Pancreas (tissue), 10 donors: ENCODE measurements at regions of chr7 and their contacts with region 1.

Region 1: DNA sequence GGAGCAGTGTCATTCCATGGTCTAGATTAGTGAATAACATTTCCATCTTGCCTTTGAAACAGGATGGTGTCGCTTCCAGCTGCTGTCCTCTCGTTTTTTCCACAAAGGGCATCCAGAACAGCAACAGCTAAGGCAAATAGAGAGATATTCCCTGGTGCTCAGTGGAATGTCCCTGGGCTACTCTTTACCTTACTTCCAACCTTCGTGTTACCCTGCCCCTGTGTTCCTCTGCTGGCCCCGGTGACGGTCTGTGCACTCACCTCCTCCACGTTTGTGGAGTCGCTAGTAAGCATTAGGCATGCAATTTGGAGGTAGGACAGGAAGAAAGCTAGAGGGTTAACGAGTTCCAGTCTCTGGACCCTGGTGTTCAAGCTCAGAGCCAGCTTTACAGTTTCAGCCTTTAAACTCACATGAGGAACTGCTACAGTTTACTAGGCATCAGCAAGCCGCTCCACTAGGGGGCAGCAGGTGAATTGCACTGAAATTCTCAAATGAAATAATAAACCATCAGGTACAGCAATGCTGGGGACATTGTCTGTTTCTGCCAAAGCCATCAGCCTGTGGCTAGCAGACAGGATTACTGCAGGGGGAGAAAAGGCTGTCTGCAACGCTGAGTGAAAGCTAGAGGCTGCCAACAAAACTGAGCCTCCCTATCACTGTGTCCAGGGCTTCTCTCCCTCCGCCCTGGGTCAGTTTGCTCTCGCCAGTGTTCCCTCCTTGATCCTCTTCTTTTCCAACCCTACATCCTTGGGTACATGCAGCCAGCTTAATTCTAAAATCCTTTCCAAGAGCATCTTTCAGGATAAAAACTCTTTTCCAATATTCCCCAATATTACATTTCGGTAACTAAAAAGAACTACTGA is 9.0 kb downstream of the MRPL32 start:
- DNase-seq: peak; percentile 56 to 87 (median 74)
- ATAC-seq: peak; percentile 58 to 90 (median 86)
- H3K4me3 ChIP-seq: no peak overlapping the region
- H3K27ac ChIP-seq: no peak overlapping the region
- H3K4me1 ChIP-seq: no peaks in the 10 kb centered on the region
- H3K27me3 ChIP-seq: no peaks in the 10 kb centered on the region
- CTCF ChIP-seq: peak; percentile 80 to 89 (median 82)

Region 2: GRCh38 chr7:43249823-43250145 is 308.6 kb after region 1 on chr7:
- intact Hi-C with region 1: loop called in 1 of 3 experiments (anchors 10 kb)
- DNase-seq: no peak
- ATAC-seq: no peak
- H3K4me3 ChIP-seq: no peak overlapping the region
- H3K27ac ChIP-seq: no peak overlapping the region
- H3K4me1 ChIP-seq: no peaks in the 10 kb centered on the region
- H3K27me3 ChIP-seq: no peaks in the 10 kb centered on the region
- CTCF ChIP-seq: no peak

Region 3: DNA sequence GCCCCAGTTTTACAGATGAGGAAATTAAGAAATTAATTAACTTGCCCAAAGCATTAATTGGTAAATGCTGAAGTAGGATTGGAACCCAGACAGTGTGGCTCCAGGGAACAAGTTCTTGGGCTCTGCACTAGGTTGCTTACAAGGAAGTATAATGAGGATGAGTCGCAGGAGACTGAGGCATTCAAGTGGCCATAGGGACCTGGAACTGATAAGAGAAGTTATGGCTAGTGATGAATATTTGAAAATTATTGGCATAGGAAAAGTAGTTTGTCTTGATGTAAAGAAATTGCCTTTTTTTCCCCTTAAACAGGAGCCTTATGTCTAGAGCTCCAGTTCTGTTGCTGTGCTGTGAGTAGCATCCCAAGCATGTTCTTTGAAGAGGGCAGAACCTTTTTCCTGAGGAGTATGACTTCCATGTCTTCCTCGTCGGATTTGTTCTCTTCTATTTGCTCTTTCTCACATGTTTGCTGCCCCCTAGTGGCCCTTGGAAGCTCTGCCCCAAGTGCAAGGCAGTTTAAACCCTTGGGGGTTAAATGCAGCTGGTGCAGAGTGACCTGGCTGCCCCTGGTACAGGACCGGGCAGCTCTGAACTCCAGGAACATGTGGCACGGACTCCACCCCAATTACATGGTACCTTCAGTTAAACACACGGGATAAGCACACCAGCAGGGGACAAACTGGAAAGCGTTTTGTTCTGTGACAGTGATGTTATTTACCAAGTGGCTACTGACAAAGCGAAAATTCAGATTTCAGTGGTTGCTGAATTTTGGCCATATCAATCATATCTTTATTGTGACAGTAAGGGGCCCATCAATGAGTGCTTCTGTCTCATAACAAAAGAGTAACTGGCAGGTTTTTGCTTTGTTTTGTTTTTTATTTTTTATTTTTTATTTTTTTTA is 320.0 kb after region 1 on chr7:
- intact Hi-C with region 1: loop called in 2 of 3 experiments (anchors 10 kb)
- DNase-seq: peak; percentile 45 to 76 (median 64)
- ATAC-seq: peak; percentile 66 to 86 (median 84)
- H3K4me3 ChIP-seq: no peak overlapping the region
- H3K27ac ChIP-seq: no peak overlapping the region
- H3K4me1 ChIP-seq: no peaks in the 10 kb centered on the region
- H3K27me3 ChIP-seq: no peaks in the 10 kb centered on the region
- CTCF ChIP-seq: peak; percentile 82 to 92 (median 86)